GM12878 (cell line): ENCODE measurements at regions of chr1 and their contacts with region 1.

Region 1: GRCh38 chr1:200139661-200140250 is 112.2 kb downstream of the NR5A2 start:
- DNase-seq: no peak
- ATAC-seq: peak; percentile 99
- H3K4me3 ChIP-seq: no peak overlapping the region
- H3K27ac ChIP-seq: no peak overlapping the region
- H3K4me1 ChIP-seq: no peaks in the 10 kb centered on the region
- H3K27me3 ChIP-seq: no peaks in the 10 kb centered on the region
- CTCF ChIP-seq: peak; percentile 70 to 75 (median 73)
- EP300 ChIP-seq: no peak
- POLR2A ChIP-seq: no peak
- RAD21 ChIP-seq: peak; percentile 82

Region 2: GRCh38 chr1:200118779-200119505 is 20.8 kb before region 1 on chr1:
- CTCF ChIA-PET with region 1: interaction called, 6 read pairs
- POLR2A ChIA-PET with region 1: no interaction called
- RAD21 ChIA-PET with region 1: interaction called, 3 read pairs
- SMC1A ChIA-PET with region 1: interaction called, 23 read pairs
- in situ Hi-C with region 1: no loop called
- intact Hi-C with region 1: no loop called
- DNase-seq: no peak
- ATAC-seq: peak; percentile 82
- H3K4me3 ChIP-seq: no peak overlapping the region
- H3K27ac ChIP-seq: no peak overlapping the region
- H3K4me1 ChIP-seq: no peaks in the 10 kb centered on the region; the same call in 1 of the 2 replicates
- H3K27me3 ChIP-seq: no peaks in the 10 kb centered on the region; a peak in 1 of 4 replicates
- CTCF ChIP-seq: no peak
- EP300 ChIP-seq: peak in 1 of 2 experiments; percentile 70; a peak in 1 of 4 replicates
- POLR2A ChIP-seq: no peak
- RAD21 ChIP-seq: no peak

Region 3: GRCh38 chr1:200191993-200192392 is 52.2 kb after region 1 on chr1:
- CTCF ChIA-PET with region 1: no interaction called
- POLR2A ChIA-PET with region 1: no interaction called
- RAD21 ChIA-PET with region 1: no interaction called
- SMC1A ChIA-PET with region 1: no interaction called
- in situ Hi-C with region 1: no loop called
- intact Hi-C with region 1: no loop called
- DNase-seq: no peak
- ATAC-seq: no peak
- H3K4me3 ChIP-seq: no peak overlapping the region
- H3K27ac ChIP-seq: no peak overlapping the region
- H3K4me1 ChIP-seq: no peaks in the 10 kb centered on the region
- H3K27me3 ChIP-seq: no peaks in the 10 kb centered on the region; a peak in 2 of 4 replicates
- CTCF ChIP-seq: no peak
- EP300 ChIP-seq: no peak
- POLR2A ChIP-seq: no peak
- RAD21 ChIP-seq: no peak

Region 4: DNA sequence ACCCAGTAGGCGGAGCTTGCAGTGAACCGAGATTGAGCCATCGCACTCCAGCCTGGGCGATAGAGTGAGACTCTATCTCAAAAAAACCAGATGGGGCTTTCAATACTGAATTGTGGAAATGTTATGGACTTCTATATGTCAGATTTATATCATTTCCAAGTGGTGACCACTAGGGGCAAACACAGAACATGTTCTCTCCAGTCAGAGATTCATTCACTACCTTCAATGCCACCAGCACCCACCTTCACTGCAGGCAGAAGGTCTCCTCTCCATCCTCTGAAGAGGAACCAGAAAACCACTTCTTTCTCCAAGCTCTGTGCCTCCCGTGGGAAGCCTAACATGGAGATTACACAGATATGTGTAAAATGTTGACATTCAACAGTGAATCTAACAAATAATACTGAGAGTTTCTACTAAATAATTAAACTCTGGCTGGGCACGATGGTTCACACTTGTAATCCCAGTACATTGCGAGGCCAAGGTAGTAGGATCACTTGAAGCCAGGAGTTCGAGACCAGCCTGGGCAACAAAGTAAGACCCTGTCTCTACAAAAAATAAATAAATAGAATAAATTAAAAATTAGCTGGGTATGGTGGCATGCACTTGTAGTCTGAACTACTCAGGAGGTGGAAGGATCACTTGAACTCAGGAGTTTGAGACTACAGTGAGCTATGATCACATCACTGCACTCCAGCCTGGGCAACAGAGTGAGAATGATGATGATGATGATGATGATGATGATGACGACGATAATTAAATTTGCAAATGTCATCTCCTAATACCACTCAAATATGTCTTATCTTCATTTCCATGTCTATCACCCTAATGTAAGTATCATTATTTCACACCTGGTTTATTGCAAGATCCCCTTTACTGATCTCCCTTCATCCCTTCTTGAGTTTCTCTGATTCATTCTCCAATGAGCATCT is 119.0 kb after region 1 on chr1:
- CTCF ChIA-PET with region 1: interaction called, 8 read pairs
- POLR2A ChIA-PET with region 1: no interaction called
- RAD21 ChIA-PET with region 1: no interaction called
- SMC1A ChIA-PET with region 1: interaction called, 6 read pairs
- in situ Hi-C with region 1: no loop called
- intact Hi-C with region 1: loop called (anchors 5 kb)
- DNase-seq: no peak
- ATAC-seq: peak; percentile 74
- H3K4me3 ChIP-seq: no peak overlapping the region
- H3K27ac ChIP-seq: no peak overlapping the region
- H3K4me1 ChIP-seq: peaks cover 4% of the 10 kb centered on the region; the same call in 1 of the 2 replicates
- H3K27me3 ChIP-seq: no peaks in the 10 kb centered on the region
- CTCF ChIP-seq: peak; percentile 40 to 54 (median 54); a peak in 4 of 6 replicates
- EP300 ChIP-seq: no peak
- POLR2A ChIP-seq: no peak
- RAD21 ChIP-seq: peak; percentile 52

Region 5: DNA sequence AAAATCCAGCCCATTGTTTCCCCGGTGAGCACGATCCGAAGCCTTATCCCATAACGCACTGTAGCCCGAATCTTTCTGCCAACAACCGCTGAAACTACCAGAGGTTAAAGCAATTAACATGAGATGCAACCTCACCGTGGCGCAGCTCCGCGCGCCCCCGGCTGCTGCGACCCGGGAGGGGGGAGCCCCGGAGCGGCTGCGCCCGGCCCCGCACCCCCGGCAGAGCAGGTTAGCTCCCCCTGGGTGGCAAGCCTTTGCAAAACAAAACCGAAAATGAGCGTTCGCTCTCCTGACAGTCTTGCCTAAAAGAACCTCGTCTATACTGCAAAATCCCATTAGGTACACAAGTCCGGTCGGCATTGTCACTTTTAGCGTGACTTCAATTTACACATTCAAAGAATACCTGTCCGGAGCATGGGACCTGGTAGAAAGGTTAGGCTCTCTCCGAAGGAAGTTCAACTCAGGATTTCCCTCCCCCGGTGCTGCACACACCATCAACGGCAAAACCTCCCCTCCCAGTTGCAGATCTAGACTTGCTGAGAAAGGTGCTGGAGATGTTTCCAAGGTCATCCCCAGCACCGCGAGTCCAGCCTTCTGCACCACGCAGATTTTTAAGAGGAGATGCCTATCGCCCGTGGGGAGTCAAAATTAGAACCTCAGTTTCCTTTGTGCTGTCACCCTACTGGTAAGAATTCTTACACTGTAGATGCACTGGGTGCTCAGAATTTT is 162.6 kb after region 1 on chr1:
- CTCF ChIA-PET with region 1: interaction called, 24 read pairs
- POLR2A ChIA-PET with region 1: no interaction called
- RAD21 ChIA-PET with region 1: interaction called, 4 read pairs
- SMC1A ChIA-PET with region 1: interaction called, 7 read pairs
- in situ Hi-C with region 1: no loop called
- intact Hi-C with region 1: no loop called
- DNase-seq: no peak
- ATAC-seq: peak; percentile 80
- H3K4me3 ChIP-seq: peak overlapping the region; percentile 81
- H3K27ac ChIP-seq: no peak overlapping the region
- H3K4me1 ChIP-seq: peaks cover 22% of the 10 kb centered on the region
- H3K27me3 ChIP-seq: peaks cover 0 to 4% of the 10 kb centered on the region in 2 experiments; a peak in 2 of 4 replicates
- CTCF ChIP-seq: 0 out of 6 replicates have a peak, but pooled peaks of 1 of the 3 experiments have one; percentile 2
- EP300 ChIP-seq: no peak
- POLR2A ChIP-seq: no peak
- RAD21 ChIP-seq: 0 out of 2 replicates have a peak, but pooled peaks have one; percentile 20